Activated naive CD4-positive, alpha-beta T cell treated with anti-CD3 and anti-CD28 coated beads for 36 hours (primary cell): ENCODE measurements at regions of chr6 and their contacts with region 1.

Region 1: GRCh38 chr6:111210194-111210728 is 123.0 kb downstream of the SLC16A10 start:
- DNase-seq: peak; percentile 22
- H3K4me3 Mint-ChIP-seq: no peak overlapping the region
- H3K27ac Mint-ChIP-seq: no peak overlapping the region
- H3K4me1 Mint-ChIP-seq: no peaks in the 10 kb centered on the region
- H3K27me3 Mint-ChIP-seq: no peaks in the 10 kb centered on the region

Region 2: DNA sequence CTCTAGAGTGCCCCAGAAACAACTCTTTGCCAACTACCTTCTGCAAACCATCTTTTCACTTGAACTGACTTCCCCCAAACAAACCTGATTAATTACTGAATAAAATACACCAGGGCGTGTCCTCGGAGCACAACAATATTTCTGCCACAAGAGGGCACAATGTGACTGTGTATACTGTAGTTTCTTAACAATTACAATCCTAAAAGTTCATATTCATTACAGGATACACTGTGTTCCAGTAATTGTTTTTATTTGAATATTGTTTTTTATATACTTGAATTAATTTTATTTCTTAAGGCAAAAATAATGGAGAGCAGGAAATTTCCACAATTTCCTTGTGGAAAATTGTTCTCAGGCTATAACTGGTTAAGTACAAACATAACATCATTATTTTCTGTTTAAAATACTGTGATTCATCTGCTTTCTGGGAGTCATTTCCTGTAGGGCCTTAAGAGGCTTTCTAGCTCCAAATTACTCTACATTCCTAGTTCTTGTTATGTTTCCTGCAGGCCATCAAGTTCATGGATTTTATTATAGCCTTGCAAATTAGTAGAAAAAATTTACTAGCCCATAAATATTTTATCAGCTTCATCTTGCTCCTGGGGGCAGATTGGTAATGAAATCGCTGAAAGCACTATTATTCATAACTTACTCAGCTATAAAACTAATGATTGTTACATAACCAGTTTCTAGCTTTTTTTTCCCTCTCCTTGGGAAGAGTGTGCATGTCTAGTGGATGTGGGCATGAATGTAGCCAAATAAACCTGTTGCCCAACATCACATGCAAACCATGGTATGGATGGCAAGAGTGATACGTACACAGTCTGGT is 681.9 kb before region 1 on chr6:
- CTCF ChIA-PET with region 1: interaction called, 3 read pairs
- intact Hi-C with region 1: loop called (anchors 2 kb)
- DNase-seq: peak; percentile 75
- H3K4me3 Mint-ChIP-seq: no peak overlapping the region
- H3K27ac Mint-ChIP-seq: no peak overlapping the region
- H3K4me1 Mint-ChIP-seq: no peaks in the 10 kb centered on the region
- H3K27me3 Mint-ChIP-seq: no peaks in the 10 kb centered on the region

Region 3: GRCh38 chr6:111011360-111012142 is 198.7 kb before region 1 on chr6:
- CTCF ChIA-PET with region 1: interaction called, 20 read pairs
- intact Hi-C with region 1: loop called (anchors 1 kb)
- DNase-seq: no peak
- H3K4me3 Mint-ChIP-seq: no peak overlapping the region
- H3K27ac Mint-ChIP-seq: no peak overlapping the region
- H3K4me1 Mint-ChIP-seq: peaks cover 6% of the 10 kb centered on the region
- H3K27me3 Mint-ChIP-seq: no peaks in the 10 kb centered on the region

Region 4: GRCh38 chr6:111057074-111057752 is 153.0 kb before region 1 on chr6:
- CTCF ChIA-PET with region 1: interaction called, 84 read pairs
- intact Hi-C with region 1: loop called (anchors 1 kb)
- DNase-seq: no peak
- H3K4me3 Mint-ChIP-seq: no peak overlapping the region
- H3K27ac Mint-ChIP-seq: no peak overlapping the region
- H3K4me1 Mint-ChIP-seq: no peaks in the 10 kb centered on the region
- H3K27me3 Mint-ChIP-seq: no peaks in the 10 kb centered on the region

Region 5: DNA sequence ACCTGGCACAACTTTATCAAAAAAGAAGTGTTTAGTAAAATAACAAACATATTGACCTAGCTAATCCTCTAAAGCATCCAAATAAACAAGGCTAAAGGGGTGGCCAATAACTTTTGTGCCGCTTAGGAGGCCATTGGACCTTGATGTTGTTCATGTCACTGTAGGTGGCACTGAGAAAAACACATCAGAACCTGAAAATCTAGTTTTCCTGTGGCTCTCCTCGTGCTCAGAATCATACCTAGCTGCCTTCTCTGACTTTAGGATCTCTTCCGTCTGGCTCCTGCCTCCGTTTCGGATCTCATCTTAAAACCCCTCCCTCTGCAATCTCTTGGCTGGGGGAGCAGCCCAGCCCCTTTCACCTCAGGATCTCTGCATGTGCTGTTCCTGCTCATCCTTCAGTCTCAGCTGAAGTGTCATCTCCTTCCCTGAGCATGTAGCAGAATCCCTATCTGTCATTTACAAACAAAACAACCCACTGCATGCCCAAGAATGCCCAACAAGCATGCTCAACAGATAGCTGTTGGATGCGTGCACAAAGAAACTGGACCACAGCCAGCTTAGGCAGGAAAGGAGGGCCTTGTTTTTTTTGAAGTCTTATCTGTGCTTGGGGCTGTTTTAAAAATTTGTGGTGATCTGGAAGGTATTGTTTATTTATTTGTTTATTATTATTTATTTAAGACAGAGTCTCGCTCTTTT is 141.6 kb before region 1 on chr6:
- CTCF ChIA-PET with region 1: interaction called, 14 read pairs
- intact Hi-C with region 1: no loop called
- DNase-seq: no peak
- H3K4me3 Mint-ChIP-seq: no peak overlapping the region
- H3K27ac Mint-ChIP-seq: no peak overlapping the region
- H3K4me1 Mint-ChIP-seq: peaks cover 6% of the 10 kb centered on the region
- H3K27me3 Mint-ChIP-seq: no peaks in the 10 kb centered on the region

Region 6: DNA sequence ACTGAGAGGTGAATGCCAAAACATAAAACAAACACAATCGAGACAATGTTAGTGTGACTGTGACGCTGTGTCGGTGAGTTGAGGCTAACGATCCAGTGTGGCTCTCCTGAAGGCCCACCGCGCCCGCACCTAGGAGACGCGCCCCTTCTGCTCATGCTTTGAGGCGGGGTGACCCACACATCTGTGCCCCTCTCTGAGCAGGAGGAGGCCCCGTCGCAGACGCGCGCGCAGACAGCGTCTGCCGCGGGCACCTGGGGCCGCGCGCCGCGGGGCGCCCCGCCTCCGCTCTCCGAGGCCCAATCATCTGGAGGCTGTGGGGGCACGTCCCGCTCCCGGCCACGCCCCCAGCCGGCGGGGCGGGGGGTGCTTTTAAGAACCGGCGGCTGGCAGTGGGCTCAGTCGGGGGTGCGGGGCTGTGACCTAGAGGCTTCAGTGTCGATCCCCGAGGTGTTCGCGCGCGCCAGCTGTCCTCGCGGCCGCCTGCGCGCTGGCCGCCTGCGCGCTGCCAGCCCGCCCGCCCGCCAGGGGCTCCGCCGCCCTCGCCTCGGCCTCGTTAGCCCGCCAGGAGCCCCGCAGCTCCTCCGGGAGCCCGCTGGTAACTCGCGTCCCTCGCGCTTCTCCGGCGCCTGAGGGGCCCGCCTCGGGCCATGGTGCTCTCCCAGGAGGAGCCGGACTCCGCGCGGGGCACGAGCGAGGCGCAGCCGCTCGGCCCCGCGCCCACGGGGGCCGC is 123.0 kb before region 1 on chr6 and contains the start of gene SLC16A10:
- CTCF ChIA-PET with region 1: interaction called, 3 read pairs
- intact Hi-C with region 1: loop called (anchors 1 kb)
- DNase-seq: peak; percentile 74
- H3K4me3 Mint-ChIP-seq: peak within 1 kb of the TSS; percentile 89
- H3K27ac Mint-ChIP-seq: peak within 1 kb of the TSS; percentile 76
- H3K4me1 Mint-ChIP-seq: peaks cover 36% of the 10 kb centered on the region
- H3K27me3 Mint-ChIP-seq: no peaks in the 10 kb centered on the region
- total RNA-seq, gene SLC16A10: 6.6 to 8.1 TPM